ENCODE measurements at regions of chr14 and their contacts with region 1.

Region 1: GRCh38 chr14:92039719-92040430 is at the start of gene TRIP11:
- DNase-seq: peak; percentile 88 to 97 (median 94)
- ATAC-seq: peak; percentile 86
- H3K4me3 ChIP-seq: peak within 1 kb of the TSS; percentile 72
- H3K4me3 Mint-ChIP-seq: peak within 1 kb of the TSS; percentile 99
- H3K27ac ChIP-seq: peak within 1 kb of the TSS; percentile 90 to 92
- H3K27ac Mint-ChIP-seq: no peak within 1 kb of the TSS
- H3K4me1 ChIP-seq: peaks cover 38% of the 10 kb centered on the region
- H3K4me1 Mint-ChIP-seq: peaks cover 53% of the 10 kb centered on the region
- H3K27me3 ChIP-seq: no peaks in the 10 kb centered on the region
- H3K27me3 Mint-ChIP-seq: no peaks in the 10 kb centered on the region
- CTCF ChIP-seq: no peak
- total RNA-seq, gene TRIP11: 30.0 to 31.2 TPM

Region 2: DNA sequence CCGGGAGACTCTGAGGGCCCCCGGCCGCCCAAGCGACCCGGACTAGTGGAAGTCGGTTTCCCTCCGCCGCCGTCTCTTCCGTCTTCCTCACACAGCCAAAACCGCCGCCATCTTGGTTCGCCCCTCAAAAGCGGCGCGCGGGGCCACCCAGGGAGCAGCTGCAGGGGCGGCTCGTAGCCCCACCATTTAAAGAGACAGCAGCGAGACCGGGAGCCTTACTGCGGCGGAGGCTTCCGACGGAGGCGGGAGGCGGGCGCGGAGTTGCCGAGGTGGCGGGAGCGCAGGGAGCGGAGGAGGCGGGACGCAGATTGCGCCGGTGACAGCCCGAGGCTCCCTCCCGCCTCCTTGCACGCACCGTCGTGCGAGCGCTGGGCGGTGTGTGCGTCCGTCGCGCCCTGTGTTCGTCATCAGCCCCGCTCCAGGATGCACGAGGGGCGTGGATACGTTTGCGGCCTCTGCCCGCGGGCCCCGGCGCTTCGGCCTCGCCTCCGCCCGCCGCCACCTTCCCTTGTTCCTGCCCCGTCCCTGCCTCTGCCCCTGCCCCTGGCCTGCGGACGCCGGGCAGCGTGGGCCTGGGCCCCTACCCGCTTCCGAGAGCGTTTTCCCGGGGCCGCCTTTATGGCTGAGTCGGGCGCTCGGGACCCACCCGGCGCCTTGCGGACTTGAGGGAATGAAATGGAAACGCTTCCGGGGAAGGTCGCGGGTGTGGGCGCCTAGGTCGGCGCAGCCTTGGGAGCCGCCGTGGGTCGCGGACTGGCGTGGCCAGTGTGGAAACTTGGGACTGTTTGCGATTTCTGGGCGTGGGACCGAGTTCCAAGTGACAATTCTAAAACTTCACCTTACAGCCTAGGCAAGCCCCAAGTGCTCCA is 529.5 kb before region 1 on chr14 and contains the start of gene PPP4R3A:
- CTCF ChIA-PET with region 1: no interaction called
- POLR2A ChIA-PET with region 1: interaction called, 17 read pairs
- intact Hi-C with region 1: loop called in 1 of 2 experiments (anchors 2 kb)
- DNase-seq: peak; percentile 82 to 98 (median 90)
- ATAC-seq: peak; percentile 85
- H3K4me3 ChIP-seq: peak within 1 kb of the TSS; percentile 90
- H3K4me3 Mint-ChIP-seq: peak within 1 kb of the TSS; percentile 100
- H3K27ac ChIP-seq: peak within 1 kb of the TSS; percentile 99
- H3K27ac Mint-ChIP-seq: peak within 1 kb of the TSS; percentile 100
- H3K4me1 ChIP-seq: peaks cover 23% of the 10 kb centered on the region
- H3K4me1 Mint-ChIP-seq: peaks cover 44% of the 10 kb centered on the region
- H3K27me3 ChIP-seq: no peaks in the 10 kb centered on the region
- H3K27me3 Mint-ChIP-seq: no peaks in the 10 kb centered on the region
- CTCF ChIP-seq: no peak
- total RNA-seq, gene PPP4R3A: 189 to 205 TPM

Region 3: GRCh38 chr14:91968280-91968679 is 71.6 kb before region 1 on chr14:
- CTCF ChIA-PET with region 1: no interaction called
- POLR2A ChIA-PET with region 1: no interaction called
- intact Hi-C with region 1: no loop called
- DNase-seq: peak in 11 of 14 experiments; percentile 11 to 71 (median 39)
- ATAC-seq: peak; percentile 98
- H3K4me3 ChIP-seq: no peak overlapping the region
- H3K4me3 Mint-ChIP-seq: peak overlapping the region; percentile 49
- H3K27ac ChIP-seq: no peak overlapping the region
- H3K27ac Mint-ChIP-seq: peak overlapping the region; percentile 89
- H3K4me1 ChIP-seq: no peaks in the 10 kb centered on the region
- H3K4me1 Mint-ChIP-seq: peaks cover 18% of the 10 kb centered on the region
- H3K27me3 ChIP-seq: no peaks in the 10 kb centered on the region
- H3K27me3 Mint-ChIP-seq: no peaks in the 10 kb centered on the region
- CTCF ChIP-seq: no peak

Region 4: DNA sequence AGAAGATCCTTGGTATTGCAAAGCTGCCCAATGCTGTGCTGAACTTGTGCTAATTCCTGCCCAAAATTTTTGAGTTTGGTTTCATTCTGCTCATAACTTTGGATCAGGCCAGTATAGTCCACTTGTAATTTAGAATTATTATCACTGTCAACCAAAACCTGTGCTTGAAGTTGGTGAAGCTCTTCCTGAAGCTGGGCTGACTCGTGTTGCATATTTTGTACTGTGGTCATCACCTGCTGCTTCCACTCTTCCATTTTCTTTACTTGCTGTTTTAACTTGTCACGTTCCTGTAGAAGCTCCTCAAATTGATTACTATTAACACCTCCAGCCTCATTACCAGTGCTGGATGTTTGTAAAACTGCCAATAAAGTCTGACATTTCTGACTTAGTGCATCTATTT is 35.8 kb before region 1 on chr14:
- CTCF ChIA-PET with region 1: no interaction called
- POLR2A ChIA-PET with region 1: interaction called, 13 read pairs
- intact Hi-C with region 1: loop called in 1 of 2 experiments (anchors 5 kb)
- DNase-seq: no peak
- ATAC-seq: no peak
- H3K4me3 ChIP-seq: no peak overlapping the region
- H3K4me3 Mint-ChIP-seq: no peak overlapping the region
- H3K27ac ChIP-seq: no peak overlapping the region
- H3K27ac Mint-ChIP-seq: peak overlapping the region; percentile 84
- H3K4me1 ChIP-seq: peaks cover 5% of the 10 kb centered on the region
- H3K4me1 Mint-ChIP-seq: peaks cover 40% of the 10 kb centered on the region
- H3K27me3 ChIP-seq: no peaks in the 10 kb centered on the region
- H3K27me3 Mint-ChIP-seq: no peaks in the 10 kb centered on the region
- CTCF ChIP-seq: no peak

Region 5: GRCh38 chr14:92121670-92122350 is 81.9 kb after region 1 on chr14 and contains the starts of genes CPSF2 and NDUFB1:
- CTCF ChIA-PET with region 1: no interaction called
- POLR2A ChIA-PET with region 1: interaction called, 46 read pairs
- intact Hi-C with region 1: loop called in 1 of 2 experiments (anchors 5 kb)
- DNase-seq: peak; percentile 74 to 91 (median 82)
- ATAC-seq: peak; percentile 87
- H3K4me3 ChIP-seq: peak within 1 kb of the TSS; percentile 100
- H3K4me3 Mint-ChIP-seq: peak within 1 kb of the TSS; percentile 100
- H3K27ac ChIP-seq: peak within 1 kb of the TSS; percentile 84 to 93
- H3K27ac Mint-ChIP-seq: peak within 1 kb of the TSS; percentile 100
- H3K4me1 ChIP-seq: peaks cover 39% of the 10 kb centered on the region
- H3K4me1 Mint-ChIP-seq: peaks cover 59% of the 10 kb centered on the region
- H3K27me3 ChIP-seq: no peaks in the 10 kb centered on the region
- H3K27me3 Mint-ChIP-seq: no peaks in the 10 kb centered on the region
- CTCF ChIP-seq: no peak
- total RNA-seq, gene CPSF2: 12.4 to 12.9 TPM
- total RNA-seq, gene NDUFB1: 45.3 to 48.1 TPM

Measured in CD4-positive, alpha-beta T cell (primary cell).